ENCODE measurements at regions of chr4 and their contacts with region 1.

Region 1: GRCh38 chr4:117134386-117134785 is 49.0 kb upstream of the TRAM1L1 start:
- DNase-seq: peak; percentile 41
- H3K4me3 Mint-ChIP-seq: no peak overlapping the region
- H3K27ac Mint-ChIP-seq: no peak overlapping the region
- H3K4me1 Mint-ChIP-seq: peaks cover 20% of the 10 kb centered on the region
- H3K27me3 Mint-ChIP-seq: no peaks in the 10 kb centered on the region
- CTCF ChIP-seq: peak; percentile 45

Region 2: GRCh38 chr4:116358588-116359222 is 775.7 kb before region 1 on chr4:
- CTCF ChIA-PET with region 1: no interaction called
- intact Hi-C with region 1: loop called (anchors 10 kb)
- DNase-seq: peak; percentile 72
- H3K4me3 Mint-ChIP-seq: no peak overlapping the region
- H3K27ac Mint-ChIP-seq: no peak overlapping the region
- H3K4me1 Mint-ChIP-seq: no peaks in the 10 kb centered on the region
- H3K27me3 Mint-ChIP-seq: no peaks in the 10 kb centered on the region
- CTCF ChIP-seq: peak; percentile 29

Region 3: DNA sequence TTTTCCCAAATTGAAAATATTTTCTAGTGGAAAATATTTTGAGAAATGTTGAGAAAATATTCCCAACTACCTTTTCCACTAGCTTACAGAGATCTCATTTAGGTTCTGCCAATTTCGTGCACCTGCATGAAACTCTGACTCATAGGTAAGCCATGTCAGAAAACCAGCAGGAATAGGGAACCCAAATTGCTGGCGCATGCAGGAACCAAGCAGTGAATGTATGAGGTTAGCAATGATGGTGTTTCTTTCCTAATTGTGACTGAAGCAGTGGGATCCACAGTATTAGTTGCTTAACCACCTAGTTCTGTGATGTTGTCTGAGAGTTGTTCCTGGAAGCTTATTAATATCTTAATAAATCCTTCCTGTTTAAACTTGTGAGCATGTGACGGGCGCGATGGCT is 332.0 kb after region 1 on chr4:
- CTCF ChIA-PET with region 1: no interaction called
- intact Hi-C with region 1: loop called (anchors 10 kb)
- DNase-seq: no peak
- H3K4me3 Mint-ChIP-seq: no peak overlapping the region
- H3K27ac Mint-ChIP-seq: no peak overlapping the region
- H3K4me1 Mint-ChIP-seq: peaks cover 17% of the 10 kb centered on the region
- H3K27me3 Mint-ChIP-seq: no peaks in the 10 kb centered on the region
- CTCF ChIP-seq: no peak

Region 4: DNA sequence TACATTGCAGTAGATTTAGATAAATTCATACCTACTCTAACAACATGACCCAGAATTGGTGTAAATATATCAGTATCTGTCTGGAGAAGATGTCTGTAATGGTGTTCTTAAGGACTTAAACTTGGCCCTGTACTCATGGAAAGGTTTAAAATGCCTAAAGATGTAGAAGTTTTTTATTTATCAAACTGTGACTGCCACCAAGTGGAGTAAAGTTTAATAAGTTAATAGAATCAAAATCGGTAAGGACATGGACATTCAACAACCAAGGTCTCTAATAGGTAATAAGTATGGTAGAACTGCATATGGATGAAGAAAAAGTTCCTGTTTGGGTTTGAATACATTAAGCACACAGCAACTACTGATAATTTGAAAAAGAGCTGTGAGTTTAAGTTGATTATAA is 425.9 kb after region 1 on chr4:
- CTCF ChIA-PET with region 1: no interaction called
- intact Hi-C with region 1: loop called (anchors 1 kb)
- DNase-seq: no peak
- H3K4me3 Mint-ChIP-seq: no peak overlapping the region
- H3K27ac Mint-ChIP-seq: no peak overlapping the region
- H3K4me1 Mint-ChIP-seq: no peaks in the 10 kb centered on the region
- H3K27me3 Mint-ChIP-seq: no peaks in the 10 kb centered on the region
- CTCF ChIP-seq: no peak

Region 5: GRCh38 chr4:118224239-118224829 is 1089.9 kb after region 1 on chr4:
- CTCF ChIA-PET with region 1: no interaction called
- intact Hi-C with region 1: loop called (anchors 5 kb)
- DNase-seq: no peak
- H3K4me3 Mint-ChIP-seq: no peak overlapping the region
- H3K27ac Mint-ChIP-seq: no peak overlapping the region
- H3K4me1 Mint-ChIP-seq: no peaks in the 10 kb centered on the region
- H3K27me3 Mint-ChIP-seq: no peaks in the 10 kb centered on the region
- CTCF ChIP-seq: peak; percentile 29

Region 6: GRCh38 chr4:118270492-118270891 is 1136.1 kb after region 1 on chr4:
- CTCF ChIA-PET with region 1: no interaction called
- intact Hi-C with region 1: loop called (anchors 2 kb)
- DNase-seq: no peak
- H3K4me3 Mint-ChIP-seq: no peak overlapping the region
- H3K27ac Mint-ChIP-seq: no peak overlapping the region
- H3K4me1 Mint-ChIP-seq: no peaks in the 10 kb centered on the region
- H3K27me3 Mint-ChIP-seq: no peaks in the 10 kb centered on the region
- CTCF ChIP-seq: no peak